ENCODE measurements at regions of chr2 and their contacts with region 1.

Region 1: GRCh38 chr2:114550895-114551793 is 108.7 kb downstream of the DPP10 start:
- DNase-seq: peak; percentile 72 to 77
- H3K4me3 ChIP-seq: no peak overlapping the region
- H3K4me3 Mint-ChIP-seq: no peak overlapping the region
- H3K27ac Mint-ChIP-seq: no peak overlapping the region
- H3K4me1 ChIP-seq: peaks cover 21% of the 10 kb centered on the region
- H3K4me1 Mint-ChIP-seq: peaks cover 18% of the 10 kb centered on the region
- H3K27me3 ChIP-seq: no peaks in the 10 kb centered on the region
- H3K27me3 Mint-ChIP-seq: peaks cover under 1% of the 10 kb centered on the region
- CTCF ChIP-seq: peak; percentile 71 to 93

Region 2: GRCh38 chr2:113965644-113966043 is 585.5 kb before region 1 on chr2:
- CTCF ChIA-PET with region 1: interaction called, 10 read pairs
- POLR2A ChIA-PET with region 1: no interaction called
- intact Hi-C with region 1: no loop called
- DNase-seq: peak; percentile 66 to 72
- H3K4me3 ChIP-seq: no peak overlapping the region
- H3K4me3 Mint-ChIP-seq: no peak overlapping the region
- H3K27ac Mint-ChIP-seq: no peak overlapping the region
- H3K4me1 ChIP-seq: peaks cover 21% of the 10 kb centered on the region
- H3K4me1 Mint-ChIP-seq: peaks cover 25% of the 10 kb centered on the region
- H3K27me3 ChIP-seq: no peaks in the 10 kb centered on the region
- H3K27me3 Mint-ChIP-seq: no peaks in the 10 kb centered on the region
- CTCF ChIP-seq: peak; percentile 59 to 62

Region 3: GRCh38 chr2:114213808-114214207 is 337.3 kb before region 1 on chr2:
- CTCF ChIA-PET with region 1: interaction called, 3 read pairs
- POLR2A ChIA-PET with region 1: no interaction called
- intact Hi-C with region 1: loop called (anchors 5 kb)
- DNase-seq: no peak
- H3K4me3 ChIP-seq: no peak overlapping the region
- H3K4me3 Mint-ChIP-seq: no peak overlapping the region
- H3K27ac Mint-ChIP-seq: no peak overlapping the region
- H3K4me1 ChIP-seq: peaks cover 15% of the 10 kb centered on the region; the same call in 1 of the 2 replicates
- H3K4me1 Mint-ChIP-seq: peaks cover 16% of the 10 kb centered on the region
- H3K27me3 ChIP-seq: no peaks in the 10 kb centered on the region
- H3K27me3 Mint-ChIP-seq: no peaks in the 10 kb centered on the region
- CTCF ChIP-seq: no peak

Region 4: DNA sequence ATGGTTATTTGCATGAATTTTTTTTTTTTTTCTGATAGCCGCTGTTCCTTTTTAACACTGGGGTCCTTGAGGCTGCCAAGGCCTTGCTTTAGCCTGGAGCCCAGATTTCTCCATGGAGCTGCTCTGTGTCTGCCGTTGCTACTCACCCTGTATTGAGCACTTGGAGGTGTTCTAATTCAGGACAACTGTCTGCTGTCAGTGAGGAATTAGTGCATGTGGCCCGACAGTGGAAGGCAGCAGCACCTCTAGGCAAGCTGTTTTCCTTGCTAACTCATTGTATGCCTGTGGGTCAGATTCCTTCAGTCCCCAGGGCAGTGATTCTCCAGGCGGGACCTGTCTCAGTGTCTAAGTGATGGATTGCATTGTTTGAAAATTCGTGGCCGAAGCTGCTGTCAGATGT is 256.4 kb before region 1 on chr2:
- CTCF ChIA-PET with region 1: no interaction called
- POLR2A ChIA-PET with region 1: no interaction called
- intact Hi-C with region 1: loop called (anchors 10 kb)
- DNase-seq: no peak
- H3K4me3 ChIP-seq: no peak overlapping the region
- H3K4me3 Mint-ChIP-seq: no peak overlapping the region
- H3K27ac Mint-ChIP-seq: no peak overlapping the region
- H3K4me1 ChIP-seq: no peaks in the 10 kb centered on the region
- H3K4me1 Mint-ChIP-seq: no peaks in the 10 kb centered on the region
- H3K27me3 ChIP-seq: no peaks in the 10 kb centered on the region
- H3K27me3 Mint-ChIP-seq: peaks cover 3% of the 10 kb centered on the region
- CTCF ChIP-seq: no peak

Region 5: DNA sequence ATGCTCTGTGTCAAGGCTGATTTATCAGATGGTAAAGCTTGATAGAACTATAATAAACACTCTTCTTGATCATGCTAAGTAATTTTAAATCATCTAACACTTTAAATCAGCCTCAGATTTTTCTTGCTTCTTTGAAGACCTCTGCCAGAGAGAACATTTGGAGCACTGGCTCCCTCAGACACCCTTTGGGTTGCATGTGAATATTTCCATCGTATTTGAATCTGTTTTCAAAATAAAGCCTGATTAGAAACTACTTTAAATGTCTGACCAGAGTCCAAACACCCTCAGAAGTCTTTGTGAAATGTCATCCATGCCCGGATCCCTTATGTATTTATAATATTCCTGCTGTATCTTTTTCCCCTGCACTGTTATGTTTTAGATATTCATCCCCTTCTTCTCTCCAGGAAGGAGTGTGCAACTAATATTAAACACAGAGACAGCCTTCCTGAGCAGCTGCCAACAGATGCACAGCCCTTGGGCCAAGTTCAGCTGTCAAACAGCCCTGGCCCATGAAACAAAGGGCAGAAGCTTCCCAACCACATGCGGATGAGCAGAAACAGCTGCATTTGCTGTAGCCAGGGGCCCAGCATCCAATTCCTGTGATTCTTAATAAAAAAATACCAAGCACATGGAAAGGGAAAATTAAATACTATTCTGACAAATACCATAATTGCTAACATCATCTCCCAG is 62.2 kb before region 1 on chr2:
- CTCF ChIA-PET with region 1: interaction called, 7 read pairs
- POLR2A ChIA-PET with region 1: no interaction called
- intact Hi-C with region 1: loop called (anchors 1 kb)
- DNase-seq: no peak
- H3K4me3 ChIP-seq: no peak overlapping the region
- H3K4me3 Mint-ChIP-seq: no peak overlapping the region
- H3K27ac Mint-ChIP-seq: no peak overlapping the region
- H3K4me1 ChIP-seq: no peaks in the 10 kb centered on the region
- H3K4me1 Mint-ChIP-seq: no peaks in the 10 kb centered on the region
- H3K27me3 ChIP-seq: no peaks in the 10 kb centered on the region
- H3K27me3 Mint-ChIP-seq: no peaks in the 10 kb centered on the region
- CTCF ChIP-seq: no peak

Measured in Caco-2 (cell line).